ENCODE measurements at regions of chr2 and their contacts with region 1.

Region 1: DNA sequence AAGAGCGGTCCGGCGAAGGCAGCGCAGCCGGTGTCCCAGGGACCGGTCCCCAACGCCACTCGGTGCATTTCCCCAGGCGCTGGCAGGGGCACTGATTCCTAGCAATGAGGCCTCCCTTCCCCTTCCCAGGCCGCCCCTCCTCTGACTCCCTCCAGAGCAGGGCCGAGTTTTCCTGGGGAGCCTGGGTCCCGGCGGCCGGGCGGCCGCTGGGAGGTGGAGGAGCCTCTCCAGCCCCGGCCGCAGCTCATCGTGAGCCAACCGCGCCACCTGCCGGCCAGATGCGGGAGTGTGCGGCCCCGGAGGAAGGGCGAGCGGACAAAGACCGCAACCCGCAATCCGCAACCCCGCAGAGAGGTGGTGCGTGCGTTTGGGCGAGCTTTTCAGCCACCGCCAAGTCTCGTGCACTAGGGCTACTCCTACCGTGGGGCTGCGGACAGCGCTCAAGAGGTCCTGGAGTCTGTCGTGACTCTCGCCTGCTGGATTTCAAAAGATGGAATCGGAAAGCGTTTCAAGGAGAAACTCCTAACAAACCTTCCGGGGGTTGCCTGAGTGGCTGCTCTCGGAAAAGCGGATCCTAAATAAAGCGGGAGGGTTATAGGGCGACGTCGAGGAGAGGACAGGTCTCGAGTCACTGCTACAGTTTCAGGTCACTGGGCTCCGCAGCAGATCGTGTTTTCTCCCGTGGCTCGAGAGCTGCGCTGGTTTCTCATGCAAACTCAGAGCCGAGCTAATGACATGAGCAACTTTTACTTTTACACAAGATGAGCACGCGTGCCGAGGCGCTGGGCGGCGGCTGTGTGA is 1.5 kb upstream of the EPHA4 start:
- DNase-seq: peak; percentile 86
- ATAC-seq: peak; percentile 48
- H3K4me3 ChIP-seq: peak overlapping the region; percentile 57 to 97 (median 73)
- H3K4me3 Mint-ChIP-seq: peak overlapping the region; percentile 94
- H3K27ac ChIP-seq: no peak overlapping the region
- H3K27ac Mint-ChIP-seq: peak overlapping the region; percentile 33
- H3K4me1 ChIP-seq: peaks cover 21 to 42% of the 10 kb centered on the region in 2 donors
- H3K4me1 Mint-ChIP-seq: peaks cover 40% of the 10 kb centered on the region
- H3K27me3 ChIP-seq: peaks cover 0 to 47% (median 30%) of the 10 kb centered on the region in 4 experiments
- H3K27me3 Mint-ChIP-seq: peaks cover 58% of the 10 kb centered on the region
- CTCF ChIP-seq: peak; percentile 98

Region 2: DNA sequence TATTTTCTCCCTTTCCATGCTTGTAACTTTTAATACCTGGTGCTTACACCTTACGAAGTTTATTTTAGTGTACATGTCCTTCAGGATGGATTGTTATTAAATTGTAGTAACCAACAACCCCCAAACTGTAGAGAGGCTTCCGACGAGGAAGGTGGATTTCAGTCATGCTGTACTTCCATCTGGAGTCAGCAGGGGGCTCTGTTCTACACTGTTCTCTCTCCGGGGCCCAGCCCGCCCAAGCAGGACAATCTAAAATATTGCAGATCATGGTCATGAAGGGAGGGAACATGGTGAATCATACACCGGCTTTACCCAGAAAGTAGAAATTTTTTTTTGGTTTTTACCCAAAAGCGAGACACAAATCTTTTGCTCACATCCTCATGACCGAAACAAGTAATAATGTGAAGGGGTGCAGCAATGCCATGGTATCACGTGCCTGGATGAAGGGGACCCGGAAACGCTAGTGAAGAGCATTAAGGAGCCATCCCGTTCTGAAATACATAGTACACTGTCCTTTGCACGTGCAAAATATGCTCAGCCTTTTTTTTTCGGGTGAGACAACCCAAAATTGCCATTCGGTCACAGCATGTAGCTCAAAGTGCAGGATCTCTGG is 886.3 kb before region 1 on chr2:
- CTCF ChIA-PET with region 1: interaction called, 32 read pairs
- POLR2A ChIA-PET with region 1: no interaction called
- intact Hi-C with region 1: no loop called
- DNase-seq: peak; percentile 69
- ATAC-seq: peak; percentile 91
- H3K4me3 ChIP-seq: no peak overlapping the region
- H3K4me3 Mint-ChIP-seq: no peak overlapping the region
- H3K27ac ChIP-seq: no peak overlapping the region
- H3K27ac Mint-ChIP-seq: no peak overlapping the region
- H3K4me1 ChIP-seq: peaks cover 3 to 9% of the 10 kb centered on the region in 2 donors
- H3K4me1 Mint-ChIP-seq: peaks cover 6% of the 10 kb centered on the region
- H3K27me3 ChIP-seq: no peaks in the 10 kb centered on the region
- H3K27me3 Mint-ChIP-seq: peaks cover 11% of the 10 kb centered on the region
- CTCF ChIP-seq: peak; percentile 92

Region 3: DNA sequence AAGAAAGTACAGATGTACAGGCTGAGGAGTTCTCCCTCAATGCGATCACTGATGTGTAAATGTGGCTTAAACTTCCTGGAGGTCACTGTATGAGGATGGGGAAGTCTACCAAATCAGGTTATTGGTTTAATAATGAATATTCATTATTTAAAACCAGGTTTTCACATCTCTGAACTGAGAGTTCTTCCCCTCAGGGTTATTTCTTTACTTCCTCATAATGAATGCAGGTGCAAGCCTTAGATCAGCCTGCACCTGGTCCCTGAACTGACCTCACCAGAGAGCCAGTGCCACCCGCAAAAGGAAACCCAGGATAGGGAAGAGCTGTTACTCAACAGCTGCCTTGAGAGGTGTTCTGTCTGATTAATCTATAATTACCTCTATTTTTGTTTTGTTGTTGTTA is 370.5 kb before region 1 on chr2:
- CTCF ChIA-PET with region 1: no interaction called
- POLR2A ChIA-PET with region 1: no interaction called
- intact Hi-C with region 1: loop called (anchors 1 kb)
- DNase-seq: peak; percentile 83
- ATAC-seq: peak; percentile 89
- H3K4me3 ChIP-seq: no peak overlapping the region
- H3K4me3 Mint-ChIP-seq: peak overlapping the region; percentile 68
- H3K27ac ChIP-seq: no peak overlapping the region
- H3K27ac Mint-ChIP-seq: peak overlapping the region; percentile 72
- H3K4me1 ChIP-seq: peaks cover 17 to 33% of the 10 kb centered on the region in 2 donors
- H3K4me1 Mint-ChIP-seq: peaks cover 43% of the 10 kb centered on the region
- H3K27me3 ChIP-seq: no peaks in the 10 kb centered on the region
- H3K27me3 Mint-ChIP-seq: no peaks in the 10 kb centered on the region
- CTCF ChIP-seq: no peak

Region 4: DNA sequence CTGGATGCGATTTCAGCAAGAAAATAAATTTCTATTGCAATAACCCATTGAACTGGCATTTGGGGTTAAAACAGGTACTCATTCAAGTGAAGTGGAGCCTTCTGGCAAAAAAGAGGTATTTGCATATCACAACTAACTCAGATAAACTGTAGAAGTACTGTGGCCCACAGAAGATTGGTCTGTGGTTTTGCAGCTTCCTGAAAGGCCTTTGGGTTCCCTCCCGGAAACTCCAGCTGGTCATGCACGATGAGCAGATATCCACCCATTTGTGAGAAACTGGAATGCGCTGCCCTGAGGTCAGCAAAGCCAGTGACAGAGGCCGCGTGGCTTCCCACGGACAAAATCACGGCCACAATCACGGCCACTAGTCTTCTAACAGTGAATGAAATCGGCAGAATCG is 107.9 kb before region 1 on chr2:
- CTCF ChIA-PET with region 1: no interaction called
- POLR2A ChIA-PET with region 1: no interaction called
- intact Hi-C with region 1: loop called (anchors 5 kb)
- DNase-seq: peak; percentile 52
- ATAC-seq: peak; percentile 78
- H3K4me3 ChIP-seq: peak overlapping the region in 4 of 5 experiments; percentile 8 to 29 (median 22)
- H3K4me3 Mint-ChIP-seq: peak overlapping the region; percentile 80
- H3K27ac ChIP-seq: no peak overlapping the region
- H3K27ac Mint-ChIP-seq: peak overlapping the region; percentile 46
- H3K4me1 ChIP-seq: peaks cover 42 to 50% of the 10 kb centered on the region in 2 donors
- H3K4me1 Mint-ChIP-seq: peaks cover 53% of the 10 kb centered on the region
- H3K27me3 ChIP-seq: peaks cover 0 to 3% (median 0%) of the 10 kb centered on the region in 4 experiments
- H3K27me3 Mint-ChIP-seq: no peaks in the 10 kb centered on the region
- CTCF ChIP-seq: no peak

Region 5: GRCh38 chr2:221554769-221555493 is 18.7 kb before region 1 on chr2:
- CTCF ChIA-PET with region 1: interaction called, 27 read pairs
- POLR2A ChIA-PET with region 1: no interaction called
- intact Hi-C with region 1: loop called (anchors 1 kb)
- DNase-seq: peak; percentile 76
- ATAC-seq: peak; percentile 92
- H3K4me3 ChIP-seq: peak overlapping the region in 2 of 5 experiments; percentile 3 to 23
- H3K4me3 Mint-ChIP-seq: peak overlapping the region; percentile 77
- H3K27ac ChIP-seq: peak overlapping the region; percentile 50 to 55
- H3K27ac Mint-ChIP-seq: peak overlapping the region; percentile 87
- H3K4me1 ChIP-seq: peaks cover 30 to 39% of the 10 kb centered on the region in 2 donors
- H3K4me1 Mint-ChIP-seq: peaks cover 64% of the 10 kb centered on the region
- H3K27me3 ChIP-seq: no peaks in the 10 kb centered on the region
- H3K27me3 Mint-ChIP-seq: no peaks in the 10 kb centered on the region
- CTCF ChIP-seq: no peak

Region 6: DNA sequence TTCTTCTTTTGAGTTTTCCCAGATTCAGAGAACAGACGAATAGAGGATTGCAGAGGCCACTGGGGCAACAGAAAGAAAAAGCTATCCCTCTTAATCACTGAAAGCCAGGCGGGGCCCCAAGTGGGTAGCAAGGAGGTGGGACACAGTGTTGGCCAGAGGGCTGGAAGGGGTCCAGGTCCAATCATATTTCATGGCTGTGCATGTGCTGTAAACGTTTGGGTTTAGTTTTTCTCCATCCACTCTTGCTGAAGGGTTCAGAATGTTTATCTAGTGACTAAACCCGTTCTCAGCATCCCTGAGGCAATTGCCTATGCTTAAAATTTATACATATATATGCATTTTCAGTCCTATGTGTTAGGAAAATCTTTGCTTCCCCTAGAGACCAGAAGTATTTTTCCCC is 97.9 kb after region 1 on chr2:
- CTCF ChIA-PET with region 1: no interaction called
- POLR2A ChIA-PET with region 1: no interaction called
- intact Hi-C with region 1: no loop called
- DNase-seq: no peak
- ATAC-seq: no peak
- H3K4me3 ChIP-seq: no peak overlapping the region
- H3K4me3 Mint-ChIP-seq: no peak overlapping the region
- H3K27ac ChIP-seq: no peak overlapping the region
- H3K27ac Mint-ChIP-seq: no peak overlapping the region
- H3K4me1 ChIP-seq: no peaks in the 10 kb centered on the region
- H3K4me1 Mint-ChIP-seq: no peaks in the 10 kb centered on the region
- H3K27me3 ChIP-seq: no peaks in the 10 kb centered on the region
- H3K27me3 Mint-ChIP-seq: peaks cover 4% of the 10 kb centered on the region
- CTCF ChIP-seq: no peak

Measured in B cell (primary cell).